ENCODE measurements at regions of chr22 and their contacts with region 1.

Region 1: DNA sequence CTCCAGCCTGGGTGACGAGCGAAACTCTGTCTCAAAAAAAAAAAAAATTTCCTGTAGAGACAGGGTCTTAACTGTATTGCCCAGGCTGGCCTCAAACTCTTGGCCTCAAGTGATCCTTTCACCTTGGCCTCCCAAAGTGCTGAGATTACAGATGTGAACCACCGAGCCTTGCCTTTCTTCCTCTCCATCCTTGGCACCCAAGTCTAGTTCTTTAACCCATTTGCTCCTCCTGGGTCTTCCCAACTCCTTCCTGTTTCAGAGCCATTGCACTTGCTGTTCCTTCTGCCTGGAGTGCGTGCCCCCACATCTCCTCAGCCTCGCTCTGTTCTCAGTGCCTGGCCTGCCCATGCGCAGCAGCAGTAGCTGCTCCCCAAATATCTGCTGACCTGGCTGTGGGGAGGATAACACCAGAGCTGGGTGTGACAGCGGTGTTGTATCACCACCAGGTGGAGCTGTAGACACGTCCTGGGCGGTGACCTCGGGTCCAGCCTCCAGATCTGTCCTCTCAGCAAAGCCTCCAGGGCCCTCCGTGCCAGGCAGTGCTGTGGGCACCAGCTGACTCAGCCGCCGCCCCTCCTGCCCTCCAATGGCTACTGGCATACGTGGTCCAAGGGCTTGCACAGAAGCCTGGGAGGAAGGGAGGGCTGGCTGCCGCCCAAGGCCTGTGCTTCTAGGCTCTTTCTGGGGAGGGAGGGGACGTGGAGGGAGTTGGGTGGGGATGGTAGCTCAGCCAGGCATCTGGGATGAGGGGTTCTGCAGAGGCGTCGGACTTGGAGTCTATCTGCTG is 22.0 kb downstream of the TEF start:
- DNase-seq: peak; percentile 94
- ATAC-seq: peak; percentile 98
- H3K4me3 ChIP-seq: no peak overlapping the region
- H3K27ac ChIP-seq: no peak overlapping the region
- H3K4me1 ChIP-seq: peaks cover 17% of the 10 kb centered on the region
- H3K27me3 ChIP-seq: no peaks in the 10 kb centered on the region
- CTCF ChIP-seq: peak; percentile 96

Region 2: GRCh38 chr22:41526837-41527799 is 123.4 kb after region 1 on chr22:
- intact Hi-C with region 1: loop called (anchors 5 kb)
- DNase-seq: no peak
- ATAC-seq: peak; percentile 47
- H3K4me3 ChIP-seq: no peak overlapping the region
- H3K27ac ChIP-seq: peak overlapping the region; percentile 44
- H3K4me1 ChIP-seq: peaks cover 28% of the 10 kb centered on the region
- H3K27me3 ChIP-seq: no peaks in the 10 kb centered on the region
- CTCF ChIP-seq: peak; percentile 84

Region 3: GRCh38 chr22:41589391-41590241 is 185.9 kb after region 1 on chr22 and contains the start of gene PMM1:
- intact Hi-C with region 1: loop called (anchors 10 kb)
- DNase-seq: peak; percentile 100
- ATAC-seq: peak; percentile 98
- H3K4me3 ChIP-seq: peak within 1 kb of the TSS; percentile 99
- H3K27ac ChIP-seq: peak within 1 kb of the TSS; percentile 86
- H3K4me1 ChIP-seq: peaks cover 15% of the 10 kb centered on the region
- H3K27me3 ChIP-seq: no peaks in the 10 kb centered on the region
- CTCF ChIP-seq: no peak
- total RNA-seq, gene PMM1: 44.4 TPM

Measured in upper lobe of right lung (tissue), 1 donor.